B cell (primary cell): ENCODE measurements at regions of chr10 and their contacts with region 1.

Region 1: DNA sequence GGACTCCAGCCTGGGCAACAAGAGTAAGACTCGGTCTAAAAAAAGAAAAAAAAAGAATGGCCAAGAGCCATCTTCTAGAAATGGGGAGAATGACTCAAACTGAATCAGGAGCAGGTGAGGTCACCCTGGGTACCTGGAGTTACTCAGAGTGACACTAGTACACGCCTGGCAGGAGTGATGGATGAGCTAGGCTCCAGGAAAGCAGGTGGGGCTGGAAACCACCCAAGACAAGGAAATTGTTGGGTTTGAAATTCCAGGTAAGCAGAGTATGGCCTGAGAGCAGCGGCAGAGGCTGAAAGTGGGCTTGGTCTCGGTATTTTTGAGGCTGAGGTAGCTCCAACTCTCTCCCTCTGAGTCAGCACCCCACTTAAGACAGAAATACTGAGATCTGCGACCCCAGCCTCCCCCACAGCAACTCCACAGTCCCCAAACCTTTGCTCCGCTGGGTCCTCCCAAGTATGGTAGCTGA is 18.5 kb downstream of the DDIT4 start:
- DNase-seq: no peak
- ATAC-seq: no peak
- H3K4me3 ChIP-seq: no peak overlapping the region
- H3K4me3 Mint-ChIP-seq: no peak overlapping the region
- H3K27ac ChIP-seq: peak overlapping the region in 1 of 2 donors; percentile 15
- H3K27ac Mint-ChIP-seq: peak overlapping the region; percentile 86
- H3K4me1 ChIP-seq: peaks cover 17 to 22% of the 10 kb centered on the region in 2 donors
- H3K4me1 Mint-ChIP-seq: peaks cover 40% of the 10 kb centered on the region
- H3K27me3 ChIP-seq: no peaks in the 10 kb centered on the region
- H3K27me3 Mint-ChIP-seq: no peaks in the 10 kb centered on the region
- CTCF ChIP-seq: no peak

Region 2: DNA sequence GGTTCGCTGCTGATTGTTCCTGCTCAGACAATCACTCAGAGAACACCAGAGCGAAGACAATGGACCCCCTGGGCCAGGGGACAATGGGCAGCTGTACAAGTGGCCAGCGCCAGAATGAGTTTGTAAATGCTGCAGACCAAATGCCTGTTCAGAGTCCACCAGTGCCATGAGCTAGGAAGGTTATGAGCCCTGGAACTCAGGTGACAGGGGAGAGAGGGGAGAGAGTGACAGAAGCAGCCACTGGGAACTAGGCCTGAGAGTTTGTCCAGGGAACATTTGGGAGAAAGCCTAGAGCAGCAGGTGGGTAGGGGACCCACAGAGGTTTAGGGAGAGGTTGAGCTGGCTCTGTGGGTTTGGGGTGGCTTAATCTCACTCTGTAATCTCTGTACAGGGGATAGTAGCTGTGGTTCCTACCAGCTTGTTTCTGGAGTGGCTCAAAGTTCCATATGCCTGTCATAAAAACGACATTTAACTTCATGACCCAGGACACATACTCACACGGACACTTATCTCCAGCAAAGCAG is 633.1 kb before region 1 on chr10:
- CTCF ChIA-PET with region 1: no interaction called
- POLR2A ChIA-PET with region 1: no interaction called
- intact Hi-C with region 1: no loop called
- DNase-seq: no peak
- ATAC-seq: no peak
- H3K4me3 ChIP-seq: no peak overlapping the region
- H3K4me3 Mint-ChIP-seq: no peak overlapping the region
- H3K27ac ChIP-seq: no peak overlapping the region
- H3K27ac Mint-ChIP-seq: no peak overlapping the region
- H3K4me1 ChIP-seq: peaks cover 0 to 4% of the 10 kb centered on the region in 2 donors
- H3K4me1 Mint-ChIP-seq: peaks cover 2% of the 10 kb centered on the region
- H3K27me3 ChIP-seq: no peaks in the 10 kb centered on the region
- H3K27me3 Mint-ChIP-seq: no peaks in the 10 kb centered on the region
- CTCF ChIP-seq: no peak

Region 3: DNA sequence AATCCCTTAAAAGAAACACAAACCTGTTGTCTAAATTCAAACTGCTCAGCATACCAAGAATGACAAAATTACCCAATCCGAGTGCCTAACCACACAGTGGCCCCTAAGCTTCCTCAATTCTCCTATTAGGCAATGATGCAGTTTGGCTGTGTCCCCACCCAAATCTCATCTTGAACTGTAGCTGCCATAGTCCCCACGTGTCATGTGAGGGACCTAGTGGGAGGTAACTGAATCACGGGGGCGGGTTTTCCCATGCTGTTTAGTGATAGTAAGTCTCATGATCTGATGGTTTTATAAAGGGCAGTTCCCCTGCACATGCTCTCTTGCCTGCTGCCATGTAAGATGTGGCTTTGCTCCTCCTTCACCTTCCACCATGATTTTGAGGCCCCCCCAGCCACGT is 463.1 kb before region 1 on chr10:
- CTCF ChIA-PET with region 1: no interaction called
- POLR2A ChIA-PET with region 1: no interaction called
- intact Hi-C with region 1: no loop called
- DNase-seq: no peak
- ATAC-seq: no peak
- H3K4me3 ChIP-seq: no peak overlapping the region
- H3K4me3 Mint-ChIP-seq: no peak overlapping the region
- H3K27ac ChIP-seq: no peak overlapping the region
- H3K27ac Mint-ChIP-seq: peak overlapping the region; percentile 55
- H3K4me1 ChIP-seq: peaks cover 21 to 25% of the 10 kb centered on the region in 2 donors
- H3K4me1 Mint-ChIP-seq: peaks cover 32% of the 10 kb centered on the region
- H3K27me3 ChIP-seq: no peaks in the 10 kb centered on the region
- H3K27me3 Mint-ChIP-seq: no peaks in the 10 kb centered on the region
- CTCF ChIP-seq: no peak

Region 4: GRCh38 chr10:71981015-71981875 is 311.0 kb before region 1 on chr10:
- CTCF ChIA-PET with region 1: no interaction called
- POLR2A ChIA-PET with region 1: interaction called, 10 read pairs
- intact Hi-C with region 1: no loop called
- DNase-seq: no peak
- ATAC-seq: no peak
- H3K4me3 ChIP-seq: no peak overlapping the region
- H3K4me3 Mint-ChIP-seq: no peak overlapping the region
- H3K27ac ChIP-seq: no peak overlapping the region
- H3K27ac Mint-ChIP-seq: no peak overlapping the region
- H3K4me1 ChIP-seq: peaks cover 0 to 7% of the 10 kb centered on the region in 2 donors
- H3K4me1 Mint-ChIP-seq: peaks cover 16% of the 10 kb centered on the region
- H3K27me3 ChIP-seq: peaks cover 0 to 3% (median 0%) of the 10 kb centered on the region in 4 experiments
- H3K27me3 Mint-ChIP-seq: peaks cover 16% of the 10 kb centered on the region
- CTCF ChIP-seq: no peak

Region 5: GRCh38 chr10:72186258-72186981 is 105.8 kb before region 1 on chr10:
- CTCF ChIA-PET with region 1: no interaction called
- POLR2A ChIA-PET with region 1: no interaction called
- intact Hi-C with region 1: no loop called
- DNase-seq: peak; percentile 15
- ATAC-seq: no peak
- H3K4me3 ChIP-seq: no peak overlapping the region
- H3K4me3 Mint-ChIP-seq: peak overlapping the region; percentile 29
- H3K27ac ChIP-seq: peak overlapping the region in 1 of 2 donors; percentile 19
- H3K27ac Mint-ChIP-seq: peak overlapping the region; percentile 32
- H3K4me1 ChIP-seq: no peaks in the 10 kb centered on the region
- H3K4me1 Mint-ChIP-seq: peaks cover 12% of the 10 kb centered on the region
- H3K27me3 ChIP-seq: no peaks in the 10 kb centered on the region
- H3K27me3 Mint-ChIP-seq: no peaks in the 10 kb centered on the region
- CTCF ChIP-seq: no peak

Region 6: DNA sequence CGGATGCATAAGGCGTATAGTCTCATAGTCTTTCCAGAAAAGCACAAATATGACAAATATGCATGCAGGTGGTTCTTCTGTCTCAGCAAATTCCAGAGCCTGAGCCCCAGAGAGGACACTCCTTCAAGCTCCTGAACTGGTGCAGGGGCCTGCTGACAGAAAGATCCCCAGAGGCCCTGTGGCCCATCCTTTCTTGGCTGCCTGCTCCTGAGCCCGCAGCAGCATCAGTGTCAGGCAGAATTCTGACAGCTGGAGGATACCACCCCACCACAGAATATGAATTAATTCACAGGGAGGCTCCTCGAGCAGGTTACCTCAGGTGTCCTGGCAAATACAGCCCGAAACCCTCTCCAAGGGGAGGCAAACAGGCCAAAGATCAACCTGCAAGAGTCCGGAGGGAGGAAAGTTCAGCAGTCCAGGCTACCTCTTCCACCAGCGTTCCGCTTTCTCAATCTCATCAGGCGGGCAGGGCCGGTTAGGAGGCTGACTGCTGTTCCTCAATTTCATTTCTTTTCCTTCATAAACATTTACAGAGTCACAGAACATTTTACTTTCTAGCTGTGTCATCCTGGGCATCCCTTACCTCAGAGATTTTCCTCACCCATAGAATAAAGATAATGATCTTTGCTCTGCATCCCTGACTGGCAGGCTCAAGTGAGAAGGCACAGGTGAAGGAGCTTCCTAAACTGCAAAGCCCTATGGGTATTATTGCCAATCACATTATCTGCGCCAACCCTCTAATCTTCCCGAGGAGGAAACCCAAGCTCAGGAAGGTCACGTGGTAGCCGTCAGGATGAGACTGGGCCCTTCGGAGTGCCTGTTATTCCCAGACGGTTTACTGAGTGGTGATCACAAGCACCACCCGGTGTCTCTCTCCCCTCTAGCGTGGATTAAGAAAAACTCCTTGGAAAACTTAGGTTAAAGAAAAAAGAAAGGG is 61.0 kb after region 1 on chr10:
- CTCF ChIA-PET with region 1: no interaction called
- POLR2A ChIA-PET with region 1: no interaction called
- intact Hi-C with region 1: no loop called
- DNase-seq: no peak
- ATAC-seq: no peak
- H3K4me3 ChIP-seq: peak overlapping the region; percentile 65 to 98 (median 97)
- H3K4me3 Mint-ChIP-seq: peak overlapping the region; percentile 99
- H3K27ac ChIP-seq: peak overlapping the region; percentile 90 to 97
- H3K27ac Mint-ChIP-seq: peak overlapping the region; percentile 99
- H3K4me1 ChIP-seq: peaks cover 15 to 17% of the 10 kb centered on the region in 2 donors
- H3K4me1 Mint-ChIP-seq: peaks cover 39% of the 10 kb centered on the region
- H3K27me3 ChIP-seq: no peaks in the 10 kb centered on the region
- H3K27me3 Mint-ChIP-seq: no peaks in the 10 kb centered on the region
- CTCF ChIP-seq: no peak